Dendritic cell treated with granulocyte-macrophage colony-stimulating factor and Interleukin-4, amounts not matched to agents 40 ng/mL and 50 ng/mL, for 4 days (primary cell): ENCODE measurements at regions of chr17 and their contacts with region 1.

Region 1: GRCh38 chr17:64129764-64130558 is at the start of gene ERN1:
- H3K4me3 Mint-ChIP-seq: peak within 1 kb of the TSS; percentile 82
- H3K27ac Mint-ChIP-seq: peak within 1 kb of the TSS; percentile 100
- H3K4me1 Mint-ChIP-seq: peaks cover 50% of the 10 kb centered on the region
- H3K27me3 Mint-ChIP-seq: no peaks in the 10 kb centered on the region

Region 2: GRCh38 chr17:64025732-64026294 is 104.1 kb before region 1 on chr17:
- intact Hi-C with region 1: loop called (anchors 1 kb)
- H3K4me3 Mint-ChIP-seq: peak overlapping the region; percentile 71
- H3K27ac Mint-ChIP-seq: peak overlapping the region; percentile 23
- H3K4me1 Mint-ChIP-seq: peaks cover 17% of the 10 kb centered on the region
- H3K27me3 Mint-ChIP-seq: peaks cover 5% of the 10 kb centered on the region

Region 3: GRCh38 chr17:64073771-64074703 is 55.9 kb before region 1 on chr17:
- intact Hi-C with region 1: loop called (anchors 2 kb)
- H3K4me3 Mint-ChIP-seq: no peak overlapping the region
- H3K27ac Mint-ChIP-seq: peak overlapping the region; percentile 70
- H3K4me1 Mint-ChIP-seq: peaks cover 42% of the 10 kb centered on the region
- H3K27me3 Mint-ChIP-seq: no peaks in the 10 kb centered on the region

Region 4: GRCh38 chr17:64145757-64146417 is 15.9 kb after region 1 on chr17:
- intact Hi-C with region 1: loop called (anchors 1 kb)
- H3K4me3 Mint-ChIP-seq: no peak overlapping the region
- H3K27ac Mint-ChIP-seq: no peak overlapping the region
- H3K4me1 Mint-ChIP-seq: peaks cover 32% of the 10 kb centered on the region
- H3K27me3 Mint-ChIP-seq: no peaks in the 10 kb centered on the region

Region 5: GRCh38 chr17:64172510-64172909 is 42.5 kb after region 1 on chr17:
- intact Hi-C with region 1: no loop called
- H3K4me3 Mint-ChIP-seq: no peak overlapping the region
- H3K27ac Mint-ChIP-seq: peak overlapping the region; percentile 17
- H3K4me1 Mint-ChIP-seq: peaks cover 53% of the 10 kb centered on the region
- H3K27me3 Mint-ChIP-seq: no peaks in the 10 kb centered on the region